Activated naive CD4-positive, alpha-beta T cell treated with anti-CD3 and anti-CD28 coated beads for 36 hours (primary cell): ENCODE measurements at regions of chr1 and their contacts with region 1.

Region 1: DNA sequence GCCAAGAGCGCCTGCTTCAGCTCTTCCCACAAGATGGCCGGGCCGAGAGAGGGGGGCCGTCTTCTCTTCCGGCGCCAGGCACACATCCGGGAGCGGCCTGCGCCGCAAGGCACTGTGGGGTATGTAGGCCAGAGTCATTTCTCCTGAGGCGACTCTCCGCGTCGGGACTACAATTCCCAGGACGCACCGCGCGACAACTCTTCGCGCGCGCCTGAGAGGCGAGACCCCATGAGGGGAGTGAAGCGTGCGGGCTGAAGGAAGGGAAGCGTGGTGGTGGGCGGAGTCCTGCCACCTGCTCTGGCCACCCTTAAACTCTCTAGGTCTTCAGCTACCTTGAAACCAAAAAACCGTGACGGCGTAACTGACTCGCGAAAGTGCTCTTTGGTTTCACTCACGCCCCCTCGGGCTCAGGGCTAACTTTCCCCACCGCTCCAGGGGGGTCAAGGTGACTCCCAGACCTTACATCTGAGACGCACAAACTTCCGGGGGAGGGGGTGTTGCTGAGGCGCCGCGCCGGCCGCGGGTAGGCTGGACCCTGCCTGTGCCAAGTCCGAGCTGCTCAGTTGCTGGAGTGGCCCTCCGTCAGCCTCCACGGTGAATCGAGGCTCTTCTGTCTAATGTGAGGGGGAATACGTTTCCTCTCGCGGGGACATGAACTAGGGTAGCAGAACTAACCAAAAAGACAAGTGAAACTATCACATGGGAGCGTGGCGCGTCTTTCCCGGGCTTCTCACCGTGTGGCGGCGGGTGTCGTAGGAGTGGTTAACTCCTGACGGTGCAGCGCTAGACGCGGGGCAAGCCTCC is at the start of gene SERBP1:
- DNase-seq: peak; percentile 97
- H3K4me3 Mint-ChIP-seq: peak within 1 kb of the TSS; percentile 97
- H3K27ac Mint-ChIP-seq: peak within 1 kb of the TSS; percentile 98
- H3K4me1 Mint-ChIP-seq: peaks cover 44% of the 10 kb centered on the region
- H3K27me3 Mint-ChIP-seq: no peaks in the 10 kb centered on the region
- total RNA-seq, gene SERBP1: 527 to 537 TPM

Region 2: DNA sequence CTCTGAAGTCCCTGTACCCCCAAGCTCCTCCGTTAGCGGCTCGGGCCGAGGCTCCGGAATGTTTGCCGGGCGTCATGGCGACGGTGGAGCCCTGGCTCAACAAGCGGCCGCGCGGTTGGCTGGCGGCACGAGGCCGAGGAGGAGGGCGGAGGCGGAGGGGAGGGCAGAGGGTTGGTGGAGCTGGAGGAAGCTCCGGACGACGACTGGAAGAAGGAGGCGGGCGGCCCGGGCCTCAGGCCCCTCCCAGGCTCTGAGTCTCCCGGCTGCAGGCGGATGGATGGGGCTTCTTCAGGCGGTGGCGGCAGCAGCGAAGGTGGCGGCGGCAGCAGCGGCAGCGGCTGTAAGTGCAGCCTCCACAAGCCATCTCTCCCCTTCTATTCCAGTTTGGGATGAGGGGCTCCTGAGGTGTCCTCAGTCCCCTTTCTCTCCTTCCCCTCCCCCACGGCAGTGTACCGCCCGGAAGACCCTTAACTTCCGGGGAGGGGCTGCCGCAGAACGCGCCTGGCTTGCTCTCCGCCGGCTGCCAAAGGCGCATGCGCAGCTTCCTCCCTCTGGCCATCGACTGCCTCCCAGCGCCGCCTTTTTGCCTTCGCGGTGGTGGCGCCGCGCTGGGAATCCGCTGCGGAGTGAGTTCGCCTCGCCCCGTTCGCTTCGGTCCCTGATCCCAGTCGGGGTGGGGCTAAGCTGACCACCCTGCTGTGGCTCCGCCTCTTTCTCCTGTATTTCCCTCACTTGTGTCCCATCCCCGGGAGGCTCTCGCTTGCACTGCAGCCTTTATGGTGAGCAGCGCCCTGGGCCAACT is 505.6 kb before region 1 on chr1 and contains the starts of genes DNAI4 and MIER1:
- CTCF ChIA-PET with region 1: no interaction called
- intact Hi-C with region 1: loop called (anchors 1 kb)
- DNase-seq: peak; percentile 98
- H3K4me3 Mint-ChIP-seq: peak within 1 kb of the TSS; percentile 92
- H3K27ac Mint-ChIP-seq: peak within 1 kb of the TSS; percentile 95
- H3K4me1 Mint-ChIP-seq: peaks cover 50% of the 10 kb centered on the region
- H3K27me3 Mint-ChIP-seq: no peaks in the 10 kb centered on the region
- total RNA-seq, gene DNAI4: 0.83 to 1.5 TPM
- total RNA-seq, gene MIER1: 56.5 to 58.3 TPM

Region 3: DNA sequence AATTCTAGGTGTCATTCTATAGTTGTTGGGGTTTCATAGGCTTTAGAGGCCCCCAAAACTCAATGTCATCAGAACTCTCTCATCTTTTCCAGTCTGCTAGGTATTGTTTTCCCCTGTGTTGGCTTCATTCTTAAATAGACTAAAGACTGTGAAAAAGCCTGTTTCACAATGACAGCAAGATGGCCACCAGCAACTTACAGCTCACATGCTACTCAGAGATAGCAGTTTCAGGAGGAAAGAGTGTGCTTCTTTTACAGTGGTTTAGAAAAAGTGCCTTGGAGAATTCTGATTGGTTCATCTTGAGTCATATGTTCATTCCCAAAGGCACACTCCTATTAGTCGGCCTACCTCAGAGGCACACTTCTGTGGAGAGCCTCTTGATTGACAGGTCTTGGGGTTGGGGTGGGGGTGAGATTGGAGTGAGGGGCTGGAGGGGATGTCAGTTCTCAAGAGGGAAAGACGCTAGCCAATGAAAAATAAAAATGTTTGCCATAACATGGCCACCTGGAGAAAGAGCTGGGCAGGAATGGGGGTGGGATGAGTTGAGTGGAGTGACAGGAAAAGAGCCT is 255.8 kb before region 1 on chr1:
- CTCF ChIA-PET with region 1: interaction called, 4 read pairs
- intact Hi-C with region 1: loop called (anchors 1 kb)
- DNase-seq: peak; percentile 63
- H3K4me3 Mint-ChIP-seq: peak overlapping the region; percentile 7
- H3K27ac Mint-ChIP-seq: peak overlapping the region; percentile 99
- H3K4me1 Mint-ChIP-seq: peaks cover 81% of the 10 kb centered on the region
- H3K27me3 Mint-ChIP-seq: no peaks in the 10 kb centered on the region

Region 4: DNA sequence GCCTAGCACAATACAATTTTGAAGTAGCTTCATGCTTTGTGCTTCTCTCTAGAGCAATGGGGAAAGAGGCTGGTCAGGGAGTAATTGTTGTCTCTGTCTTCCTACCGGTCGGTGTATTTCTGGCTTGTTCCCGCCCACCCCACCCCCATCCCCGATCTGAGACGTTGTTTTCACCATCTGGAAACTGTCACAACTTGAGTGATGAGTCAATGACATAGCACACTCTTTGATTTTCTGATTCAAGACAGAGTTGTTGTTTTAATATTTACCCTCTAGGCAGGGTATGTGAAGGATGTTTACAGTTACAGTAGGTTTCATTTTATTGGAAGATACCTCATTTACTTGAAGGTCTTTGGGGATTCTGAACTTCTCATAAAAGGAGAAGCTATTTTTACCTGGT is 115.9 kb before region 1 on chr1:
- CTCF ChIA-PET with region 1: interaction called, 3 read pairs
- intact Hi-C with region 1: loop called (anchors 1 kb)
- DNase-seq: peak; percentile 56
- H3K4me3 Mint-ChIP-seq: peak overlapping the region; percentile 47
- H3K27ac Mint-ChIP-seq: peak overlapping the region; percentile 95
- H3K4me1 Mint-ChIP-seq: peaks cover 46% of the 10 kb centered on the region
- H3K27me3 Mint-ChIP-seq: no peaks in the 10 kb centered on the region

Region 5: GRCh38 chr1:67479146-67479891 is 48.8 kb after region 1 on chr1:
- CTCF ChIA-PET with region 1: interaction called, 3 read pairs
- intact Hi-C with region 1: loop called (anchors 2 kb)
- DNase-seq: peak; percentile 47
- H3K4me3 Mint-ChIP-seq: no peak overlapping the region
- H3K27ac Mint-ChIP-seq: no peak overlapping the region
- H3K4me1 Mint-ChIP-seq: peaks cover 12% of the 10 kb centered on the region
- H3K27me3 Mint-ChIP-seq: no peaks in the 10 kb centered on the region

Region 6: GRCh38 chr1:67735806-67736627 is 305.5 kb after region 1 on chr1:
- CTCF ChIA-PET with region 1: no interaction called
- intact Hi-C with region 1: no loop called
- DNase-seq: peak; percentile 73
- H3K4me3 Mint-ChIP-seq: peak overlapping the region; percentile 53
- H3K27ac Mint-ChIP-seq: peak overlapping the region; percentile 74
- H3K4me1 Mint-ChIP-seq: peaks cover 16% of the 10 kb centered on the region
- H3K27me3 Mint-ChIP-seq: peaks cover 4% of the 10 kb centered on the region